Activated T-helper 2 cell treated with anti-CD3 and anti-CD28 coated beads, Interferon-gamma antibody, Interleukin-2, Interleukin-4, amounts not matched to agents 10 μg/mL and 5 μg/mL and 100 μg/mL, durations not matched to agents 14 hours and 24 hours and 36 hours (primary cell): ENCODE measurements at regions of chr4 and their contacts with region 1.

Region 1: GRCh38 chr4:119314356-119314755 is 7.6 kb downstream of the FABP2 start:
- DNase-seq: no peak
- H3K4me3 Mint-ChIP-seq: no peak overlapping the region
- H3K27ac Mint-ChIP-seq: no peak overlapping the region
- H3K4me1 Mint-ChIP-seq: no peaks in the 10 kb centered on the region
- H3K27me3 Mint-ChIP-seq: peaks cover 38% of the 10 kb centered on the region

Region 2: GRCh38 chr4:119490335-119490734 is 176.0 kb after region 1 on chr4:
- intact Hi-C with region 1: loop called (anchors 10 kb)
- DNase-seq: no peak
- H3K4me3 Mint-ChIP-seq: no peak overlapping the region
- H3K27ac Mint-ChIP-seq: no peak overlapping the region
- H3K4me1 Mint-ChIP-seq: no peaks in the 10 kb centered on the region
- H3K27me3 Mint-ChIP-seq: no peaks in the 10 kb centered on the region

Region 3: DNA sequence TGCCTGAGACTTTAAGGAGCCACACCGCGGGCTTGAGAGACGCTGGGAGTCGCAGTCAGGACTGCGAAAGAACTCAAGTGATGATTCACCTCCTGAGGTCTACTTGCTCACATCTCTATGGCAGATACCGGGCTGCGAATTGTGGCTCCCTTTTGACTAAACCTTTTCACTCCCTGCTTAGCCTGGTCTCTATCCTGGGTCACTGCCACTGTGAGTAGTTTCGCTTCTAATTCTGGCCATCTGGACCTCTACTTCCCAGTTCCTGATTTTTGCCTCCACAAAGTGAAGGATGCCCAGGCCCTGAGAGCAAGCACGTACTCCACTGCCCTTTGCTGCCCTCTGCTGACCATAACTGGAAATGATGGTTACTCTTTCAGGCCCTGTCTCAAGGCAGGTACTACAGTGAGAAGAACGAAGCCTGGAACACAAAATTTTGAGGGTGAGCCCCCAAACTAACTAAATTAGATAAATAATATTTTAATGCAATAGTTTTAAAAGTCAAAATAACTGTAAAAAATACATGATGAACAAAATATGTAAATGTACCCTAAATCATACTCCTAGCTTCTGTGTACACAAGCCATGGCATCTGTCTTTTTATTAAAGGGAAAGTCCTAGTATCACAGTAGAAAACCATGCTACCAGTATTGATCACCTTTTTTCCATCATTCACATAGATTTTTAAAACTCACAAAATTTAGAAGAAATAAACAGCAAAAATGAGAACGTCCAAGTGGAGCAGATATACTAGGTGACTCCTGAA is 735.6 kb after region 1 on chr4:
- intact Hi-C with region 1: loop called (anchors 5 kb)
- DNase-seq: peak; percentile 55
- H3K4me3 Mint-ChIP-seq: no peak overlapping the region
- H3K27ac Mint-ChIP-seq: no peak overlapping the region
- H3K4me1 Mint-ChIP-seq: peaks cover 4% of the 10 kb centered on the region
- H3K27me3 Mint-ChIP-seq: no peaks in the 10 kb centered on the region